CD4-positive, alpha-beta memory T cell (primary cell): ENCODE measurements at regions of chr16 and their contacts with region 1.

Region 1: DNA sequence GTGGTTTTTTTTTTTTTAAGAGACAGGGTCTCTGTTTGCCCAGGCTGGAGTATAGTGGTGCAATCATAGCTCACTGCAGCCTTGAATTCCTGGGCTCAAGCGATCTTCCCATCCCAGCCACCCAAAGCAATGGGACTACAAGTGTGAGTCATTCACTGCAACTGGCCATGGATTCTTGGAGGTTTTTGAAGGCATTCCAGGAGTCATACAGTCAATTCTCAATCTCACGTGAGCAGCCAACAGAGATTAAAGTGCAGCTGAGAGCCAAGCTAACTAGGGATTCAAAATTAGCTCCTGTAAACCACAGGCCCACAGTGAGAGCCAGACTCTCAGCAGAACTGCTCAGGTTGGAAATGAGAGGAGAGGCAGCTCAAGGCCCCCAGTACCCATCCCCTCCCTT is 30.2 kb downstream of the XPO6 start:
- DNase-seq: no peak
- H3K4me3 ChIP-seq: no peak overlapping the region
- H3K4me3 Mint-ChIP-seq: peak overlapping the region in 7 of 8 donors; percentile 55 to 88 (median 72)
- H3K27ac ChIP-seq: peak overlapping the region; percentile 38
- H3K27ac Mint-ChIP-seq: peak overlapping the region; percentile 79 to 96 (median 94)
- H3K4me1 ChIP-seq: peaks cover 82% of the 10 kb centered on the region
- H3K4me1 Mint-ChIP-seq: peaks cover 66 to 94% (median 80%) of the 10 kb centered on the region in 4 donors
- H3K27me3 ChIP-seq: no peaks in the 10 kb centered on the region
- H3K27me3 Mint-ChIP-seq: no peaks in the 10 kb centered on the region

Region 2: DNA sequence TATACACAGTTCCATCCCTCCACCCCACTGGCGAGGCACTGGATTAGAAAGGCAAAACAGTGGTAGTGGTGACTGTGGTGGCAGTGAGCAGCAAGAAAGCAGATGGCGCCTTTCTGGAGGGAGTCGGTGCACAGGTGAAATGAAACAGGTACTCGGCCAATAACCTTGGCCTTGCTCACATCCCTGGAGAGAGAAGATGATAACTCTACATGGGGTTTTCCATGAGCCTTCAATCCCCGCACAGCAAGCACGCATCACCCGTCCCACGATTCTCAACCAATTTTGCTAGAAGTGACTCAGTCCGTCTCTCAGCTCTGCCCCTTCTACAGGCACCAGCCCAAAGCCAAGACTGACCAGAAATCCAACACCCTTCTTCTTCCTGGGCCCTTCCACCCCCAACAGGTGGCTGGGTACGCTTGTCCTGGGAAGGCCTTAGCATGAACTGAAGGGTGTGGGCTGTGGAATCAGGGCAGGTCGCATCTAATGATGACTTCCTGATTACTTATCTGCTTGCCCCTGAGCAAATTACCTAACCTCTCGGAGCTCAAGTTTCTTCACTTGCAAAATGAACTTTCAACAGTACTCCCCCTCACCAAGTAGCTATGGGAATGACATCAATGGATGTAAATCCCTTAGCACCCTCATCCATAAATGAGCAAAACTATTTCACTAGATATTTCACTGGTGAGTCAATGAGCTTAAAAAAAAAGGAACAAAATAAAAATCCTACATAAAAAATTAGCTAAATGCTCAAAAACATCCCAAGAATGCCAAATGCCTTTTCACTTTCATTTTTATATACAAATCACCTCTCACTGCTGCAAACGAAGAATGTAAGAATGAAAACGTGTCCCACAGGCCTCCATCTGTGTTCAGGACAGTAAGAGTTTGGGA is 12.3 kb after region 1 on chr16:
- CTCF ChIA-PET with region 1: interaction called, 24 read pairs
- POLR2A ChIA-PET with region 1: interaction called, 42 read pairs
- intact Hi-C with region 1: no loop called
- DNase-seq: peak in 2 of 5 donors; percentile 42 to 80
- H3K4me3 ChIP-seq: peak overlapping the region; percentile 18 to 53
- H3K4me3 Mint-ChIP-seq: peak overlapping the region; percentile 76 to 91 (median 84)
- H3K27ac ChIP-seq: peak overlapping the region; percentile 88
- H3K27ac Mint-ChIP-seq: peak overlapping the region; percentile 94 to 99 (median 98)
- H3K4me1 ChIP-seq: peaks cover 87% of the 10 kb centered on the region
- H3K4me1 Mint-ChIP-seq: peaks cover 62 to 85% (median 75%) of the 10 kb centered on the region in 4 donors
- H3K27me3 ChIP-seq: no peaks in the 10 kb centered on the region
- H3K27me3 Mint-ChIP-seq: no peaks in the 10 kb centered on the region